ENCODE measurements at regions of chr1 and their contacts with region 1.

Region 1: GRCh38 chr1:156751758-156752757 is 583 bp upstream of the HDGF start:
- DNase-seq: peak; percentile 99
- H3K4me3 Mint-ChIP-seq: peak overlapping the region; percentile 79
- H3K27ac Mint-ChIP-seq: peak overlapping the region; percentile 99
- H3K4me1 Mint-ChIP-seq: peaks cover 37% of the 10 kb centered on the region
- H3K27me3 Mint-ChIP-seq: no peaks in the 10 kb centered on the region
- CTCF ChIP-seq: no peak

Region 2: GRCh38 chr1:155084722-155085503 is 1667.1 kb before region 1 on chr1:
- CTCF ChIA-PET with region 1: no interaction called
- POLR2A ChIA-PET with region 1: no interaction called
- intact Hi-C with region 1: no loop called
- DNase-seq: peak; percentile 98
- H3K4me3 Mint-ChIP-seq: peak overlapping the region; percentile 100
- H3K27ac Mint-ChIP-seq: peak overlapping the region; percentile 96
- H3K4me1 Mint-ChIP-seq: peaks cover 28% of the 10 kb centered on the region
- H3K27me3 Mint-ChIP-seq: peaks cover 19% of the 10 kb centered on the region
- CTCF ChIP-seq: peak; percentile 89

Region 3: GRCh38 chr1:156733989-156734584 is 18.0 kb before region 1 on chr1:
- CTCF ChIA-PET with region 1: interaction called, 136 read pairs
- POLR2A ChIA-PET with region 1: interaction called, 194 read pairs
- intact Hi-C with region 1: no loop called
- DNase-seq: no peak
- H3K4me3 Mint-ChIP-seq: no peak overlapping the region
- H3K27ac Mint-ChIP-seq: peak overlapping the region; percentile 66
- H3K4me1 Mint-ChIP-seq: peaks cover 16% of the 10 kb centered on the region
- H3K27me3 Mint-ChIP-seq: no peaks in the 10 kb centered on the region
- CTCF ChIP-seq: no peak

Region 4: DNA sequence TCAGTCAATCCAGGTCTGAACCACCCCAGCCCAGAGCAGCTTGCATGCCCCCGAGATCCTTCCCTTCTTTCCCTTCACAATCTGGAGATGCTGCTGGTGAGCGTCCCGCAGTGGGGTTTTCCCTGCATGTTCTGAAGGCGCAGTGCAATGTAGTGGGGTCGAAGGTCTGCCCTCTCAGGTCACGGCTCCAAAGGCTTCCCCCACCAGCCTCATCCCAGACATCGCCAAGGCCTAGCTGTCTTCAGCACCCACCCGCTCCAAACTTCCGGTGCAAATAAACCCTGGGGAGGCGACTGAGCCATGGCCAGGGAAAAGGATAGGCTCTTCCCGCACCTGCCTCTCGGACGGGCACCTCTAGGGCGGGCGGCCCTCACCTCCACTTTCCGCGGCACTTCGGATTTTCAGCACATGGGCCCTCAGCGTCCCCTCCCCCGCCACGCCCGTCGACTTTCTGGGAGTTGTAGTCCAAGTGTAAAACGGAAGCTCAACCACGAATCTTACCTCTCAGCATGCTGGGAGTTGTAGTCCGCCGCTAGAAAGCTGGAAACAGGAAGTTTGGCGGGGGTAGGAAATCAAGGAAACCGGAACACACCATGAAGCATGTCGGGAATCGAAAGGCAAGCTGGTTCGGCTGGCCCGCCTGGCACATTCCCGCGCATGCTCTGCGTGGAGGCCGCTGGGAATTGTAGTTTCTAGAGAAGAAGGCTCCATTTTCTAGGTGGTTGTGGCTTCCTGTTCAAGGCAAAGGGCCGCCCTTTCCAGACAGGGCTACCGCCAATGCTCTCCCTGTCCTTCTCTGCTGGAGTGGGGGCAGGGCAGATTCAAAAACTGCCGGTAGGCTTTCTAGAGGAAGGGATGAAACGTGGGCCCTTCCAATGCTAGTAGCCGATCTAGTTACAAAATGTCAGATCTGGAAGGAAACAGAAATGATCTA is 11.1 kb before region 1 on chr1 and contains the start of gene MRPL24:
- CTCF ChIA-PET with region 1: interaction called, 8 read pairs
- POLR2A ChIA-PET with region 1: interaction called, 194 read pairs
- intact Hi-C with region 1: no loop called
- DNase-seq: peak; percentile 100
- H3K4me3 Mint-ChIP-seq: peak within 1 kb of the TSS; percentile 100
- H3K27ac Mint-ChIP-seq: peak within 1 kb of the TSS; percentile 98
- H3K4me1 Mint-ChIP-seq: peaks cover 30% of the 10 kb centered on the region
- H3K27me3 Mint-ChIP-seq: no peaks in the 10 kb centered on the region
- CTCF ChIP-seq: no peak
- total RNA-seq, gene MRPL24: 233 and 261 TPM in 2 replicates

Region 5: GRCh38 chr1:156882543-156882942 is 130.5 kb after region 1 on chr1:
- CTCF ChIA-PET with region 1: no interaction called
- POLR2A ChIA-PET with region 1: no interaction called
- intact Hi-C with region 1: no loop called
- DNase-seq: no peak
- H3K4me3 Mint-ChIP-seq: no peak overlapping the region
- H3K27ac Mint-ChIP-seq: no peak overlapping the region
- H3K4me1 Mint-ChIP-seq: no peaks in the 10 kb centered on the region
- H3K27me3 Mint-ChIP-seq: peaks cover 79% of the 10 kb centered on the region
- CTCF ChIP-seq: no peak

Region 6: DNA sequence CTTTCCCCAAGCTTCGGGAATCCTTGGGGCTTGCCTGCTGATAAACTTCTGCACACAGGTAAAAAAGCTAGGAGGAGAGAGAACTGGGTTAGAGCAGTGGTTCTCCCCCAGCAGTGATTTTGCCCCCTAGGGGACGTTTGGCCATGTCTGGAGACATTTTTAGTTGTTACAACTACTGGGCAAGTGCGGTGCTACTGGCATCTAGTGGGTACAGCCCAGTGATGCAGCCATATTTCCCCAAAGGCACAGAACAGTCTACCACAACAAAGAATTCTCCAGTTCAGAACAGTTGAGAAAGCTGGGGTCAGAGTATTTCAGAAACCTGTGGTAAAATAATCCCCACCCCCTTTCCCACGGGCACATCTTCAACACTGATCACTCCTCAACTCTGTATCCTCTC is 209.7 kb after region 1 on chr1:
- CTCF ChIA-PET with region 1: no interaction called
- POLR2A ChIA-PET with region 1: no interaction called
- intact Hi-C with region 1: no loop called
- DNase-seq: no peak
- H3K4me3 Mint-ChIP-seq: no peak overlapping the region
- H3K27ac Mint-ChIP-seq: peak overlapping the region; percentile 28
- H3K4me1 Mint-ChIP-seq: peaks cover 11% of the 10 kb centered on the region
- H3K27me3 Mint-ChIP-seq: no peaks in the 10 kb centered on the region
- CTCF ChIP-seq: no peak

Region 7: GRCh38 chr1:157226739-157227138 is 474.7 kb after region 1 on chr1:
- CTCF ChIA-PET with region 1: no interaction called
- POLR2A ChIA-PET with region 1: no interaction called
- intact Hi-C with region 1: no loop called
- DNase-seq: no peak
- H3K4me3 Mint-ChIP-seq: no peak overlapping the region
- H3K27ac Mint-ChIP-seq: no peak overlapping the region
- H3K4me1 Mint-ChIP-seq: no peaks in the 10 kb centered on the region
- H3K27me3 Mint-ChIP-seq: peaks cover 43% of the 10 kb centered on the region
- CTCF ChIP-seq: no peak